Left cardiac atrium (tissue), 4 donors: ENCODE measurements at regions of chr16 and their contacts with region 1.

Region 1: GRCh38 chr16:4846891-4847773 is at the starts of genes GLYR1 and UBN1:
- DNase-seq: peak; percentile 100
- ATAC-seq: peak; percentile 97 to 98
- total RNA-seq, gene GLYR1: 65.2 to 78.2 TPM
- total RNA-seq, gene UBN1: 28.0 to 33.6 TPM

Region 2: DNA sequence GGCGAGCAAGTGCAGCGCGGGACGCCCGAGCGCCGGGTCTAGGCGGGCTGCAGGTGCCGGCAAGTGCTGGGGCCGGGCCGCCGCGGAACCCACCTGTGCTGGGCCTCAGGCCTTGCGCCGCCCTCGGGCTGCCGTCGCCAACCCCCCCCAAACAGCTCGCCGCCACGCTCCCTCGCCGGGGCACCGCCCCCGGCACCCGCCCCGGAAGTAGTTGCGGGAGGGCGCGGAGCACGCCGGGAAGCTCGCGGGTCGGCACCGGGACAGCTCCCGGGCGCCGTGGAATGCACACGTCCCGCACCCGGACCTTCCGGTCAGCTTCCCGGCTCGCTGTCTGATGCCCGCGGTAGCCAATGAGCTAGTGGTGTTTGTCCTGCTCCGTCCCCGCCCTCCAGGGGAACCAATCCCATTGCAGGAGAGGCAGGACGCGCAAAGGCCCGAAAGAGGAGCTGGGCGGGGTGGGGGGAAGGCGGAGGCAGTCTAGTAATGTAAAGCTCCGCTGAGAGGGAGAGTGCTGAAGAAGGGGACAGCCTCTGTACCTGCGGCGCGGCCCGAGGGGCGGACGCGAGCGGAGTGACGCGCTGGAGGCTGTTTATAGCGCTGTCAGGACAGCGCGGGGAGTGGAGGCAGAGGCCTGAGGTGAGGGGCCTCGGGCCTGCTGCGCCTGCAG is 112.9 kb before region 1 on chr16 and contains the starts of genes ANKS3 and DNAAF8:
- intact Hi-C with region 1: no loop called
- DNase-seq: peak; percentile 97
- ATAC-seq: peak; percentile 98
- total RNA-seq, gene ANKS3: 11.0 to 11.6 TPM
- total RNA-seq, gene DNAAF8: 0.52 to 0.85 TPM

Region 3: GRCh38 chr16:4805231-4805630 is 41.9 kb before region 1 on chr16:
- intact Hi-C with region 1: loop called in 1 of 2 experiments (anchors 5 kb)
- DNase-seq: peak; percentile 43
- ATAC-seq: no peak